HEK293 (cell line): ENCODE measurements at regions of chr9 and their contacts with region 1.

Region 1: GRCh38 chr9:22008736-22009562 is at the start of gene CDKN2B:
- H3K4me3 ChIP-seq: peak within 1 kb of the TSS; percentile 95
- H3K27ac ChIP-seq: peak within 1 kb of the TSS; percentile 85
- H3K4me1 ChIP-seq: peaks cover 3% of the 10 kb centered on the region; the same call in 1 of the 2 replicates
- CTCF ChIP-seq: peak; percentile 96

Region 2: DNA sequence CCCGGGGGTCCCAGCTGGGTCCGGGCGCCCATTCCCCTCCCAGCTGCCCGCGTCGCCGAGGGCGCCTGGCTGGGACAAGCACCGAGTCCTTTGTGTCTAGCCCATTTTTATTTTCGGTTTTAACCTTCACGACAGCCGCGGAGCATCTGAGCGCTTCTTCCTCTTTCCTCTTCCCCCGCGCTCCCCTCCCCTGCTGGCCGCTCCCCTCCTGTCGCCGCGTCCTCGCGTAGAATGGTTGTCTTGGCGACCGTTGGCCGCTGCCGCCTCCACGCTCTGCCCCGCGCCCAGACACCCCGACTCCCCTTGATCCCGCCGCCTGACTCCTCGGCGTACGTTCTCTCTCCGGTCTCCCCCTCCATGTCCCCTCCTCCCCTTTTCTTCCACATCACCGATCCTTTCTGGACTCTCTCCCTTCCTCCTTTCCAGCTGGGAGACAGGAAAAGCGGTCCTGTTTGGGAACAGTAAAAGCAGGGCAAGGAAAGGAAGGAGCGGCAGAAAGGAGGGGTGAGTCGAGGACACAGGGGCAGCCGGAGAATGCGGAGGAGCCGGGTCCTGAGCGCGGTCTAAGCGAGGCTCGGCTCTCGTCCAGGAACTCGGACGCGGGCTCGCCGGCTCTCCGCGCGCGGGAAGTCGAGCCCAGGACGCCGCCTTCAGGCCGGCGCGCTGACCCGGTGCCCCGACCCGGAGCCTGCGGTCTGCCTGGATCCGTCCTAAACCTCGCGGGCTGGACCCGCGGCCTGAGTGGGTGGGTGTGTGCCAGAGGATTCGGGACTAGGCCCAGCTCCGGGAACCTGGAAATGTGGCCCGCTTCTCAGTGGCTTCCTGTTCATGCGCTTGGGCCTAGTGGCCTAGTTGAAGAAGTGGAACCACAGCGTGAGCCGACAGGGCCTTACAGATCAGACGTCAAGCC is 13.5 kb before region 1 on chr9:
- CTCF ChIA-PET with region 1: interaction called, 45 read pairs
- POLR2A ChIA-PET with region 1: interaction called, 156 read pairs
- H3K4me3 ChIP-seq: peak overlapping the region; percentile 59
- H3K27ac ChIP-seq: peak overlapping the region; percentile 99
- H3K4me1 ChIP-seq: peaks cover 5% of the 10 kb centered on the region; the same call in 1 of the 2 replicates
- CTCF ChIP-seq: no peak

Region 3: GRCh38 chr9:22046243-22046885 is 37.4 kb after region 1 on chr9:
- CTCF ChIA-PET with region 1: interaction called, 12 read pairs
- POLR2A ChIA-PET with region 1: interaction called, 23 read pairs
- H3K4me3 ChIP-seq: no peak overlapping the region
- H3K27ac ChIP-seq: no peak overlapping the region
- H3K4me1 ChIP-seq: 0 out of 2 replicates have a peak, but pooled peaks cover 5% of the 10 kb centered on the region
- CTCF ChIP-seq: no peak

Region 4: DNA sequence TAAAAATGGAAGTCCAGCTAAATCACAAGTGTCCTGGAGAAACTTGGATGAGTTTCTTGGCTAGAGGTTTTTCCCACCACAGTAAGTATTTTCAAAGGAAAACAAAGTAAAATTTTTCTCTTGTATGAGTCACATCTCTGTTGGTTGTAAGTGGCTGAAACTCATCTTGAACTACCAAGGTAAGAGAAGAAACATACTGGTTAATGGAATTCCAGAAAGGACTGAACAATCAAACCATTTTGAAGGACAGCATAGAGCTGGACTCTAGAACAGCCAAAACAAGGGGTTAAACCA is 103.0 kb after region 1 on chr9:
- CTCF ChIA-PET with region 1: interaction called, 50 read pairs
- POLR2A ChIA-PET with region 1: interaction called, 55 read pairs
- H3K4me3 ChIP-seq: no peak overlapping the region
- H3K27ac ChIP-seq: no peak overlapping the region
- H3K4me1 ChIP-seq: peaks cover 12% of the 10 kb centered on the region
- CTCF ChIP-seq: no peak

Region 5: DNA sequence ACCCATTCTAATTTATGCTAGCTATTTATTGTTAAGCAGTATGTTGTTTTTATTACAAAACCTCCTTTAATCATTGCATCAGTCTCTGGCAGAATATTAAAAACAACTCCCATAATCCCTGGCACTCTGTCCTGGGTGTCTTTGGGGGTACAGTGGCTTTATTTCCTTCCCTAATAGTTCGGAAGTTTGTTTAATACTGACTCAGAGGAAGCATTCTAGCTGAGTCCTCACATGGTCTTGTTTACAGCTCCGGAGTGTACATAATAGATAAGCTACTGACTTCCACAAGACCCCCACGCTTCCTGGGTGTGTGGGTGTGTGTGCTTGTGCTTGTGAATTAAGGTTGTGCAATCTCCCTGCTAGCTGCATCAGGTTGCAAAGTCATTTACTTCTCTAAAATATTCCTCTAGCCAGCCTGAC is 150.0 kb after region 1 on chr9:
- CTCF ChIA-PET with region 1: interaction called, 10 read pairs
- POLR2A ChIA-PET with region 1: interaction called, 8 read pairs
- H3K4me3 ChIP-seq: no peak overlapping the region
- H3K27ac ChIP-seq: no peak overlapping the region
- H3K4me1 ChIP-seq: peaks cover 10% of the 10 kb centered on the region
- CTCF ChIP-seq: no peak

Region 6: GRCh38 chr9:22244141-22245011 is 235.4 kb after region 1 on chr9:
- CTCF ChIA-PET with region 1: interaction called, 65 read pairs
- POLR2A ChIA-PET with region 1: interaction called, 51 read pairs
- H3K4me3 ChIP-seq: no peak overlapping the region
- H3K27ac ChIP-seq: no peak overlapping the region
- H3K4me1 ChIP-seq: peaks cover 18% of the 10 kb centered on the region
- CTCF ChIP-seq: peak; percentile 22; the same call in 1 of the 2 replicates